ENCODE measurements at regions of chr4 and their contacts with region 1.

Region 1: GRCh38 chr4:38856524-38857337 is at the start of gene TLR6:
- DNase-seq: peak in 1 of 10 donors; percentile 36

Region 2: GRCh38 chr4:38411092-38411491 is 445.6 kb before region 1 on chr4:
- intact Hi-C with region 1: no loop called
- DNase-seq: no peak

Region 3: DNA sequence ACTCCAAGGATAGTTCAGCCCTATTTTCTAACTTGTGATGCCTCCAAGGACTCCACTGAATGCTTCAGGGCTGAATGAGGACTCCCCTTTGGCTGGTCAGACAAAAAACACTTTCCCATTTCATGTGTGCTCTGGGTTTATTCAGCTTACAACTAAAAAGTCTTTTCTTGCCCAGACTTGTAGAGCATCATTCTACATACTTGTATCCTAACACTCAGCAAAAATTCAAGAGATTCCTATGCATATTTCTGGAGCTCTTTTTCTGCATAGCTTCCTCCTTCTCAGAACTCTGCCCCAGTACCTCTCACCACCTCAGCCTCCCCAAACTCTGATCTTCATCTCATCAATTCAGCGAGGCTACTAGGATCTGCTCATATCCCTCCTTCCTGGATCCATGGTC is 214.9 kb before region 1 on chr4:
- intact Hi-C with region 1: no loop called
- DNase-seq: no peak

Region 4: DNA sequence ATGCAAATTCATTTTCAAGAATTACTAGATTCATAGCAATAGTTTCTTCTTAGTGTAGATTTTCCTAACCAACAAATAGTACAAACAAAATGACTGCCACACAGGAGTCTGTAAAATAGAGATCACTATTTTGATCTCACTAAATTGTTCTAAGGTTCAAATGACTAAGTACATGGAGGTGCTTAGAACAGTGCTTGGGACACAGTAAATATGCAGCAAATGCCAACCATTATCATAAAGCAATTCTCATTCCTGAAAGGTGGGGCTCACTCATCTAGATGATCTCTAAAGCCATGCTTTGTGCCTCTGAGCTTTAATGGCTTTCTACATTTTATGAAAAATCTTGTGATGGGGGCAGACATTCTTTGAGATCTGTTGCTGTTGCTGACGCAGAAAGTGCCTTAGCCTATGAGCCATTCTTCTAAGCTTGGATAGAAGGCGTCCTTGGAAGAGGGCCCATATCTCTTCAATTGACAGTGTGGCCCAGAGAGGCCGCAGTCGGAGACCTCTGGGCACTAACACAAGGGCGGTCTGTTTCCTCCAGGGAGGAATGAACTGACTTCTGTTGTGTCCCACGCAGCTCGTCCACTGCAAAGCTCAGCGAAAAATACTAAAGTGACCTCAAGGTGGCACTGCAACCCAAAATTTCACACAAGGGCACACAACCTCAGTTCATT is 97.5 kb before region 1 on chr4:
- intact Hi-C with region 1: loop called (anchors 5 kb)
- DNase-seq: peak; percentile 58 to 97 (median 85)

Region 5: DNA sequence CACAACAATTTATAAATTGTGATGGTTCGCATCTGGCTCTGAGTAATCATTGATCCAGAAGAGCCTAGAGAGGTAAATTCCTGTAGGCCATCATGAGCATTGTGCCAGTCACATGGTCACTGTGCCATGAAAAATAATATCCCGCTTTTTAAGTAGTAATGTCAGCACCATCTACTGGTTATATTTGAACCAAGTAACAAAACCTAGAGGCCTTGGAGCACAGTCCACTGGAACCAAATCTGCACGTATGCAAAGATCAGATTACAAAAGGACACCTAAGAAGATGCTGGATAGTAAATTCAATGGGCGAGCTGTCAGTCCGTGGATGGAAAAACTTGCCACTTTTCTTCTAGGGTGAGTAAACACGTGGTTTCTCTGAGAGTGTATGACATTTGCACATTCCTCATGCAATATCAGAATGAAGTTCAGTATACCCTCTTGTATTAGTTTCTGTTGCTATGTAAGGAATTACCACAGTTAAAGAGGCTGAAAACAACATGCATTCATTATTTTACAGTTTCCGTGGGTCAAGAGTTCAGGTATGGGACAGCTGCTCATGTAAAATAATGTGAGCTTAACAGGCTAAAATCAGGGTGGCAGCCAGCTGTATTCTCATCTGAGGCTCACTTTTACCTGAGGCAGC is 37.7 kb after region 1 on chr4:
- intact Hi-C with region 1: no loop called
- DNase-seq: no peak

Measured in posterior cingulate gyrus (tissue), 11 donors.